Vagina (tissue), 2 donors: ENCODE measurements at regions of chrX and their contacts with region 1.

Region 1: GRCh38 chrX:136182414-136182813 is 35.1 kb downstream of the FHL1 start:
- DNase-seq: no peak
- H3K4me3 ChIP-seq: no peak overlapping the region
- H3K27ac ChIP-seq: no peak overlapping the region
- H3K4me1 ChIP-seq: peaks cover 20% of the 10 kb centered on the region
- H3K27me3 ChIP-seq: no peaks in the 10 kb centered on the region
- CTCF ChIP-seq: no peak
- POLR2A ChIP-seq: no peak

Region 2: GRCh38 chrX:135893294-135893817 is 289.1 kb before region 1 on chrX and contains the starts of genes CT45A10 and SAGE1:
- intact Hi-C with region 1: no loop called
- DNase-seq: no peak
- H3K4me3 ChIP-seq: no peak within 1 kb of the TSS
- H3K27ac ChIP-seq: no peak within 1 kb of the TSS
- H3K4me1 ChIP-seq: no peaks in the 10 kb centered on the region
- H3K27me3 ChIP-seq: no peaks in the 10 kb centered on the region
- CTCF ChIP-seq: no peak
- POLR2A ChIP-seq: no peak
- total RNA-seq, gene CT45A10: not detected
- total RNA-seq, gene SAGE1: not detected

Region 3: DNA sequence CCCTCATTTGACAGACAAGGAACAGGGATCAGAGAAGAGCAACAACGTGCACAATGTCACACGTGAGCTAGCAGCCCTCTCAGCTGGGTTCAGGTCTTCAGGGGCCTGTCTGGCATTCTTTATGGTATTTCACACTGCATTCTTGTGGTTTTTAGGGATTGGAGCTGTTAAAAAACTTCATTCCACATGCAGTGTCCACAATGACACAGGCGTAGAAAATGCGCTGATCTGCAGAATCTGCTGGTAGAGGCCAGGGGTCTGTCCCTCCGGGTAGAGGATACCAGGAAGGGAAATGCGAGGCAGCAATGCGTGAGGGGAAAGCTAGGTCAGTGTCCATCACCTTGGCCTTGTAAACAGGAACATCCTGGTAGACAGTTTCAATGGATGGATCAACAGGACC is 32.1 kb after region 1 on chrX:
- intact Hi-C with region 1: loop called (anchors 2 kb)
- DNase-seq: peak in 1 of 2 donors; percentile 80
- H3K4me3 ChIP-seq: no peak overlapping the region
- H3K27ac ChIP-seq: peak overlapping the region; percentile 5
- H3K4me1 ChIP-seq: peaks cover 7% of the 10 kb centered on the region
- H3K27me3 ChIP-seq: no peaks in the 10 kb centered on the region
- CTCF ChIP-seq: no peak
- POLR2A ChIP-seq: no peak